Activated CD4-positive, alpha-beta T cell treated with anti-CD3 and anti-CD28 coated beads, Interleukin-2, amount 10 ng/mL, durations not matched to agents 24 days and 14 days (primary cell): ENCODE measurements at regions of chr5 and their contacts with region 1.

Region 1: GRCh38 chr5:115634343-115635132 is 8.7 kb upstream of the TMED7 start:
- DNase-seq: peak; percentile 94
- H3K4me3 Mint-ChIP-seq: peak overlapping the region; percentile 52
- H3K27ac Mint-ChIP-seq: no peak overlapping the region
- H3K4me1 Mint-ChIP-seq: peaks cover 29% of the 10 kb centered on the region
- H3K27me3 Mint-ChIP-seq: peaks cover 64% of the 10 kb centered on the region

Region 2: GRCh38 chr5:114803353-114803752 is 831.2 kb before region 1 on chr5:
- intact Hi-C with region 1: no loop called
- DNase-seq: no peak
- H3K4me3 Mint-ChIP-seq: no peak overlapping the region
- H3K27ac Mint-ChIP-seq: no peak overlapping the region
- H3K4me1 Mint-ChIP-seq: no peaks in the 10 kb centered on the region
- H3K27me3 Mint-ChIP-seq: no peaks in the 10 kb centered on the region

Region 3: DNA sequence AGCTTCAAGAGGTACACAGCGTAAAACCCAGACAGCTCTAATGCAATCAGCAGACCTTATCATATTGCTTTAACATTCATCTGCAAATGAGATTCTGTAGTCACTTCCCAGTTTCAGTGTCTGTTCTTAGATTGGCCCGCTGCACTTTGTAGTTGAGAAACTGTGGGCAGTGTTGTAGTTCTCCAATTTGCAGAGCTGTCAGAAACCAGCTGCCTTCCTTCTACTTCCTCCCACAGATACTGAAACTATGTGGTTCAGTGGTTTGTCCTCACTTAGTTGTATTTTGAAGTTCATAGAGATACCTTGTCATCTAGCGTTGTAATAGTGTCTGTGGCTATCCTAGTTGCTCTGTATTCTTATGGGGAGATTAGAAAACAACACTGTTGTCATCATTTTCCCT is 425.3 kb before region 1 on chr5:
- intact Hi-C with region 1: loop called (anchors 5 kb)
- DNase-seq: peak; percentile 90
- H3K4me3 Mint-ChIP-seq: peak overlapping the region; percentile 24
- H3K27ac Mint-ChIP-seq: peak overlapping the region; percentile 68
- H3K4me1 Mint-ChIP-seq: peaks cover 19% of the 10 kb centered on the region
- H3K27me3 Mint-ChIP-seq: no peaks in the 10 kb centered on the region

Region 4: GRCh38 chr5:115831163-115831768 is 196.7 kb after region 1 on chr5:
- intact Hi-C with region 1: loop called (anchors 1 kb)
- DNase-seq: peak; percentile 77
- H3K4me3 Mint-ChIP-seq: no peak overlapping the region
- H3K27ac Mint-ChIP-seq: no peak overlapping the region
- H3K4me1 Mint-ChIP-seq: peaks cover 7% of the 10 kb centered on the region
- H3K27me3 Mint-ChIP-seq: no peaks in the 10 kb centered on the region

Region 5: DNA sequence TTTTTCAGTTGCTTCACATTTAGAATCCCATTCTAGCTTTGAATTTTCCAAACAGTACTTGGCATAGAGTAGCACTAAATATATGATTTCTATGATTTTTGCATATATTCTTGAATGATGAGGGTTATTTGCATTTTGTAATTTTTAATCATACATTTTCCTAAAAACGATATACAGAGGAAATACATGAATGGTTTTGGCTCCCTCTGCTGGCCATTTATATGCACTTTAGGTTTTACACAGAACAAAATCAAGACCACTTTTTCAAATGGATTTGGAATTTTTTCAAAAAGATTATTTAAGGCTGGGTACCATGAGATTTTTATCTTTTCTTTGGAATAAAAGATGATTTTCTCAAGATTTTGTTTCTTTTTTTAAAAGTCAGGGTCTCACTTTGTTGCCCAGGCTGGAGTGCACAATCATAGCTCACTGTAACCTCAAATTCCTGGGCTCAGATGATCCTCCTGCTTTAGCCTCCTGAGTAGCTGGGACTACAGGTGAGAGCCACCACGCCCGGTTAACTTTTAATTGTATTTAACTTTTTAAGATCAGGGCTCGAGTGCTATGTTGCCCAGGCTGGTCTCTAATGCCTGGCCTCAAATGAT is 433.6 kb after region 1 on chr5:
- intact Hi-C with region 1: loop called (anchors 1 kb)
- DNase-seq: peak; percentile 76
- H3K4me3 Mint-ChIP-seq: no peak overlapping the region
- H3K27ac Mint-ChIP-seq: no peak overlapping the region
- H3K4me1 Mint-ChIP-seq: no peaks in the 10 kb centered on the region
- H3K27me3 Mint-ChIP-seq: peaks cover 40% of the 10 kb centered on the region

Region 6: DNA sequence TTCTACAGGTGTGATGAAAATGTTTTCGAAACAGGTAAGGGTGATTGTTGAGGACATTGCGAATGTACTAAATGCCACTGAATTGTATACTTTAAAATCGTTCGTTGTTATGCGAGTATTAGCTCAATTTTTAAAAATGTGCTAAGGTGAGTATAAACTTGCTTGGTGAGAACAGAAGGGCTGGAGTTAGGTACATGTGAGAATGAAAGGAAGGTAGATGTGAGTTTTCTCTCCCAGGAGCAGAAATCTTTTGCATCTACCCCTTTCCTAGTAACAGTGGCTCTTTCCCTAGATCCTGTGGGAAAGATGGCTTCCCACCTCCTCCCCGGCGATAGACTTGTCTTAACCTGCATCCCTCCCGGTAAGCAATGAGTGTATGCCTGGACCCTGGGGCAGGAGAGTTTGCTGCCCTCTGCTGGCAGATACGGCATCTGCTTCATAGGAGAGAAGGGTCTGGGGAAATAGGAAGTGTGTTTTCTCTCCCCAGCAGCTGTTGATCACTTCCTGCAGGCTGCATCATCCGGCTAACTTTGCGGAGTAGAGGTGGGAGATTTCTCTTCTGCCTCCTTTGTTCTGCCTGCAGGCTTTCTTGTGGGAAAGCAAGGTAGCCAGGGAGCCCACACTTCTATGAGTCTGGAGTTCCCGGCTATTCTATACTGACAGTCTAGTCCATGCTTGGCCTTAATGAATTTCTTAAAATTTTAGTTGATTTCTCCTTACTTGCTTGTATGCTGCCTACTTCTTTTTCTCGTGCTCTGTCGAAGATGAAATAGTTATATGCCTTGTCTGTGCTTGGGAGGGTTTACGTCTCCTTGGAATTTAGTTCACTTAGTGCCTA is 1313.4 kb after region 1 on chr5:
- intact Hi-C with region 1: loop called (anchors 5 kb)
- DNase-seq: peak; percentile 88
- H3K4me3 Mint-ChIP-seq: no peak overlapping the region
- H3K27ac Mint-ChIP-seq: no peak overlapping the region
- H3K4me1 Mint-ChIP-seq: no peaks in the 10 kb centered on the region
- H3K27me3 Mint-ChIP-seq: no peaks in the 10 kb centered on the region